Right ventricle myocardium superior (tissue), 1 donor: ENCODE measurements at regions of chrX and their contacts with region 1.

Region 1: DNA sequence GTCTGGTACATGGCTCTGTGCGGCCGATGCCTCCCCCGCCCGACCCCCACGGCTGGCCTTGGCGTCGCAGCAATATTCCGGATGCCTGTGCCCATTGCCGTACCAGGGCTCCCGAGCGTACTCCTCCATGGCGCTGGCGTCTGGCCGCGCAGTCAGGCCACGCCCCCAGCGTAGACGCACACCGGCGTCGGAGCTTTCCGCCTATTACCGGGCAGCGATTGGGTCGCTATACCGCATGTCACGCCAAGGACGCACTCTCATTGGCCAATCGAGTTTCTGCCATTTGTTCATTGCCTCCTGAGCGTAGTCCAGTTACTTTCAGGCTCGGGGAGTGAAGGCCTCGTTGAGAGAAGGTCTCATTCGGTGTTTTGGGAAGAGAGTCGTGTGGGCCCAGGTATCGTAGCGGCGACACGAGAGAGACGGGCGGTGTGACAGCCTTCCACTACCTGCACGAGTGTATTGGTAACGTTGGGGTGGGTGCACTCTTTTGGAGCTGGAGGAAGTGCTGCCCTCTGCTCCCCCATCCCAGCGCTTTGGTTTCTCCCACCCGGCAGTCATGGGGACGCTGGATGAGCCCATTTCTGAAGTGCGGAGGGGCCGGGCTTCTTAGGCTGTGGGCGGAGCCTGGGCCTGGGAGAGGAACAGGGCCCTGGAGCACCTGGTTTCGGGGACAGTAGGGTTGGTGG is at the starts of genes PQBP1 and TIMM17B:
- DNase-seq: peak; percentile 93
- ATAC-seq: peak; percentile 97
- total RNA-seq, gene PQBP1: 56.2 TPM
- total RNA-seq, gene TIMM17B: 79.7 TPM

Region 2: GRCh38 chrX:48801280-48802088 is 96.3 kb before region 1 on chrX and contains the start of gene HDAC6:
- intact Hi-C with region 1: loop called (anchors 10 kb)
- DNase-seq: peak; percentile 98
- ATAC-seq: peak; percentile 97
- total RNA-seq, gene HDAC6: 35.3 TPM